GM10248 (cell line): ENCODE measurements at regions of chr7 and their contacts with region 1.

Region 1: GRCh38 chr7:41940760-41941343 is 238.0 kb upstream of the INHBA start:
- DNase-seq: peak; percentile 73
- CTCF ChIP-seq: peak; percentile 88

Region 2: GRCh38 chr7:41881331-41882130 is 59.3 kb before region 1 on chr7:
- CTCF ChIA-PET with region 1: interaction called, 11 read pairs
- POLR2A ChIA-PET with region 1: no interaction called
- DNase-seq: peak; percentile 79
- CTCF ChIP-seq: no peak

Region 3: GRCh38 chr7:41900532-41900931 is 40.3 kb before region 1 on chr7:
- CTCF ChIA-PET with region 1: interaction called, 11 read pairs
- POLR2A ChIA-PET with region 1: no interaction called
- DNase-seq: no peak
- CTCF ChIP-seq: no peak

Region 4: GRCh38 chr7:41930538-41931262 is 10.2 kb before region 1 on chr7:
- CTCF ChIA-PET with region 1: interaction called, 139 read pairs
- POLR2A ChIA-PET with region 1: no interaction called
- DNase-seq: no peak
- CTCF ChIP-seq: no peak

Region 5: DNA sequence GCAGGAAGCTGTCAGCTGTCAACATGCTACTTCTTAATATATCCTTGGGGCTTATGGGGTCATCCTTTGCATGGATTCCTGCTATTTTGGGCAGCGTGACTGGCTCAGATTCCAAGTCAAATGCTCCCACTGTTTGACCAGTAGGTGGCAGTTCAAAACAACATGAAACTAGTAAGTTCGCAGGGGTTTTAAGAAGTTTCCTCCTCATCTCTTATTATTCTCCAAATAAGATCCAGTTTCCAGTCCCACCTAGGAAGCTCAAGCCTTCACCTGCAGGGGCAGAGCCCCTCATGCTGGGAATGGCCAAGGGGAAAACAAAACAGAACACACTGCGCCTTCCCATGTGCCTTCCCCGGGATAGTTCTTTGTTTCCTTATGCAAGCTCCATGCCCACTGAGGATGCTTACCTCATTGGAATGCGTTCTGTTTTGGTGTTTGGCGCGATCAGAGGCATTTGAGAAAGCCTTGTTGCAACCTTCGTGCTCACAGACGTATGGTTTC is 36.3 kb after region 1 on chr7:
- CTCF ChIA-PET with region 1: interaction called, 16 read pairs
- POLR2A ChIA-PET with region 1: no interaction called
- DNase-seq: no peak
- CTCF ChIP-seq: peak; percentile 49

Region 6: GRCh38 chr7:42107484-42108245 is 166.8 kb after region 1 on chr7:
- CTCF ChIA-PET with region 1: no interaction called
- POLR2A ChIA-PET with region 1: no interaction called
- DNase-seq: no peak
- CTCF ChIP-seq: no peak

Region 7: GRCh38 chr7:42876182-42877068 is 935.6 kb after region 1 on chr7:
- CTCF ChIA-PET with region 1: interaction called, 48 read pairs
- POLR2A ChIA-PET with region 1: no interaction called
- DNase-seq: peak; percentile 60
- CTCF ChIP-seq: peak; percentile 90

Region 8: GRCh38 chr7:43834463-43835251 is 1893.8 kb after region 1 on chr7:
- CTCF ChIA-PET with region 1: interaction called, 14 read pairs
- POLR2A ChIA-PET with region 1: no interaction called
- DNase-seq: no peak
- CTCF ChIP-seq: no peak